Activated T-helper 1 cell treated with anti-CD3 and anti-CD28 coated beads, Interleukin-12 subunit alpha, Interleukin-12 subunit beta, Interleukin-2, Interleukin-4 antibody, amounts not matched to agents 30 ng/mL and 10 ng/mL and 1 ng/mL, durations not matched to agents 14 hours and 24 hours and 36 hours (primary cell): ENCODE measurements at regions of chr15 and their contacts with region 1.

Region 1: GRCh38 chr15:85625856-85626255 is 168.9 kb downstream of the KLHL25 start:
- DNase-seq: peak; percentile 35
- H3K4me3 Mint-ChIP-seq: peak overlapping the region; percentile 41
- H3K27ac Mint-ChIP-seq: peak overlapping the region; percentile 89
- H3K4me1 Mint-ChIP-seq: peaks cover 56% of the 10 kb centered on the region
- H3K27me3 Mint-ChIP-seq: no peaks in the 10 kb centered on the region

Region 2: DNA sequence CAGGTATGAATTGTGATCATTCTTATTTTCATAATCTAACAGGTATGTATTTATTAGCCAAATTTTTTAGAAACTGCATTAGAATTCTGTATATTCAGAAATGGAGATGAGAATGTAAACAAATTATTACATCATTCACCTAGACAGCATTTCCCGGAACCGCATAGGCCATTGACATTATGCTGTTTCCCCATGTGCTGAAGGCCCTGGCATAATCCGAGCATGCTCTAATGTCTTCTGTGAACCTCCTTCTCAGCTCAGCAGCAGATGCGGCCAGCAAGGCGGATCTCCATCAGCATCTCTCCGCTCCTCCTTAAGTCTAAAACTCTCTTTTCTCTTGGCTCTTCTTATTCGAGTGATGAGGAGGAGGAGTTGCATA is 50.9 kb after region 1 on chr15:
- intact Hi-C with region 1: no loop called
- DNase-seq: no peak
- H3K4me3 Mint-ChIP-seq: no peak overlapping the region
- H3K27ac Mint-ChIP-seq: no peak overlapping the region
- H3K4me1 Mint-ChIP-seq: peaks cover 13% of the 10 kb centered on the region
- H3K27me3 Mint-ChIP-seq: no peaks in the 10 kb centered on the region

Region 3: DNA sequence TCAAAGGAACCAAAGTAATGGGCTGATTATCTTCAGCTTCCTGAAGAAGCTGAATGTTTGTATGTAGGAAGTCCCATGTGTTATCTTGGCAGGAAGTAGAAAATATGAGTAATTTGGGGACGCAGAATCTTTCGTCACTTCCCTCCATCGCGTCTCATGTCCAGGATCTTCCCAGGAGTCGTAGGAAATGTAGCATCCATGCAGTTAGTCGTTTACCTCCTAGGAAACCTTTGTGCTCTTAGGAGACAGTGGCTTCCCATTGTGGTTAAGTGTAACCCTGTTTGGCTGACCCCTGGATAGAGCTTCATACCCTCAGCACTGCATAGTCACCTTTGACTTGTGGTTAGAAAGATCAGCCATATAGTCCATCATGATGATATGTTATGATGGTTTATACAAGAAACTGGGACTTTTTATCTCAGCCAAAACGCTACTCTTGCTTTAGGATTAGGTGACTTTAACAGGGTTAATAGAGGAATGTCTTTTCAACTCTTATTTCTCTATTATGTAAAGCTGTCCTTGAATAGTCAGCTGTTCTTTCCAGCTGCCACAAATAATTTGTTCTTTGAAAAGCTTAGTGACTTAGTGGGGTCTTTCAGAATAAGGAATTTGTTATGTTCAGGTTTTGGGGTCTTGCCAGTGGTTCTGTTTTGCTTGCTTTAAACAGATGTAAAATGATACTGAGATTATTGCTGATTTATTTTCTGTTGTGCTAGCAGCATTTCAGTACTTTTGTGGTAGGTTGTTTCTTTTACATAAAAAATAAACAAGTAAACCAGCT is 76.7 kb after region 1 on chr15:
- intact Hi-C with region 1: loop called (anchors 2 kb)
- DNase-seq: peak; percentile 29
- H3K4me3 Mint-ChIP-seq: peak overlapping the region; percentile 78
- H3K27ac Mint-ChIP-seq: peak overlapping the region; percentile 98
- H3K4me1 Mint-ChIP-seq: peaks cover 66% of the 10 kb centered on the region
- H3K27me3 Mint-ChIP-seq: no peaks in the 10 kb centered on the region